ENCODE measurements at regions of chr4 and their contacts with region 1.

Region 1: DNA sequence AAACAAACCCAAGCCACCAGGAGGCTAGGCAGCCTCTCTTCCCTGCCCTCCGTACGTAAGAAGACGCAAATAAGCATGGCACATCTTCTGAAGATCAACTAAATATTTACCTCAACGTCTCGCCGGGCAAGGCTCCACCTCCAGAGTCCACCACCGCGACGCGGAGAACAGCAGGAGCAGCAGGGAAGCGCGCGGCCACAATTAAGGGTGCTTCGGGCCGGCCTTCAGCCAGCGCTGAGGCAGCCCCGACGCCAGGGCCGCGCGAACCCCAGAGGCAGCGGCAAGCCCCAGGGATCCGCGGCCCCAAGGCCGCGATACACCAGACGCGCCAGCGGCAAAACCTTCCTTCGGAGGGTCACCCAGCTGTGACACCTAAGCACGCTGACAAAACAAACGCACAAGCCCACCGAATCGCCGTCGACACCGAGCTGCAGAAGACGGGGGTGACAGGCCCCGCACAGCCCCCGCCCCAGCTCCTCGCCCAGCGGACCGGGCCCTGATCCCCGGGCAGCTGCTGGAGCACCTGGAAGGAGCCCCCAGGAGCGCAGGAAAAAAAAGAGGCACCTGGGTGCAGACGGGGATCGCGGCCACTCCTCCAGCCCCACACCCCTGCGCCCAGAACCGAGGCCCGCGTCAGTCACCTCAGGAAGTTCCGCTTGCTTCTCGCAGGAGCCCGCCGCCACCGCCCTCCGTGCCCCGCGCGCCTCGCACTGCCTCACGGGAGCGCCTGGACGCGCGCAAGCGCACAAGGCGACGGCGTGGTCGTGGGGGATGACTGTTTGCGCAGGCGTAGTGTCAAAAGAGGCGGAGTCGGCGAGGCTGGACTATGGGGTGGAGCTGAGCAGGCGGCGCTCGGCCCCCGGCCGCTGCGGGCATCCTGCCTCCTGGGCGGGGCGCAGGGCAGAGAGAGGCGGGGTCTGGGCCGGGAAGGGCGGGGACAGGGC is at the starts of genes HAUS3 and POLN:
- DNase-seq: peak; percentile 98 to 100 (median 99)
- ATAC-seq: peak; percentile 90
- H3K4me3 ChIP-seq: peak within 1 kb of the TSS; percentile 89 to 93
- H3K4me3 Mint-ChIP-seq: peak within 1 kb of the TSS; percentile 82
- H3K27ac ChIP-seq: peak within 1 kb of the TSS; percentile 86 to 88
- H3K27ac Mint-ChIP-seq: peak within 1 kb of the TSS; percentile 85
- H3K4me1 ChIP-seq: peaks cover 40% of the 10 kb centered on the region
- H3K4me1 Mint-ChIP-seq: peaks cover 56% of the 10 kb centered on the region
- H3K27me3 ChIP-seq: no peaks in the 10 kb centered on the region
- H3K27me3 Mint-ChIP-seq: no peaks in the 10 kb centered on the region
- CTCF ChIP-seq: no peak
- total RNA-seq, gene HAUS3: 154 TPM
- total RNA-seq, gene POLN: 0.89 to 1.7 TPM

Region 2: DNA sequence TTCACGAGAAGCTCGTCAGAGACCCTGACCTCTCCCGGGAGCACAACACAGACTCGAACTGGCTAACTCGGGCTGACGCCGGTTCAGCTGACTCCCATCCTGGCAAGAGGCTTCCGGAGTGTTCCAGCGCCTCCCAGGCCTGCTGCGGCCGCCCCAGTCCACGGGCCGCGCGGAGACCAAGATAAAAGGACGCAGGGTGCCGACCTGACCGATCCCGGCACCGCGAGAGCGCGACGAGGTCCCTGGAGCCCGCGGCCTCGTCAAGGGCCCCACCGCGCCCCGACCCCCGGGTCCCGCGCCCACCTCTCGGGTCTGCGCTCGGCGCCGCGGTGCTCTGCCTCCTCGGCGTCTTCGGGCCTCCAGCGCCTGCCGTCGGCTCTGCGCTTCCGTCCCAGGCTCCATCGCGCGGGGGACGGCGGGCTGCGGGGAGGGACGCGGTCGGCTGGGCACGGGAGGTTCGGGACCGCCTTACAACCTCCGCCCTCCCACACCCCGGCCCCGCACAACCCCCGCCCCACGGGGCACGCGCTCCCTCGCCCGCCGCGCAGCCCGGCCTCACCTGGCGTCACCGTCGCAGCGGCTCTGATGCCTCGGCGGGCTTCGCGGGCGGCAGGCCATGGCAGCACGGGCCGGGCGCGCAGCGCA is 530.0 kb before region 1 on chr4:
- CTCF ChIA-PET with region 1: no interaction called
- POLR2A ChIA-PET with region 1: no interaction called
- intact Hi-C with region 1: no loop called
- DNase-seq: peak in 5 of 9 experiments; percentile 30 to 65 (median 40)
- ATAC-seq: peak; percentile 17
- H3K4me3 ChIP-seq: peak overlapping the region; percentile 76 to 82
- H3K4me3 Mint-ChIP-seq: peak overlapping the region; percentile 94
- H3K27ac ChIP-seq: peak overlapping the region; percentile 79 to 97
- H3K27ac Mint-ChIP-seq: peak overlapping the region; percentile 94
- H3K4me1 ChIP-seq: peaks cover 42% of the 10 kb centered on the region
- H3K4me1 Mint-ChIP-seq: peaks cover 60% of the 10 kb centered on the region
- H3K27me3 ChIP-seq: no peaks in the 10 kb centered on the region
- H3K27me3 Mint-ChIP-seq: no peaks in the 10 kb centered on the region
- CTCF ChIP-seq: no peak

Region 3: DNA sequence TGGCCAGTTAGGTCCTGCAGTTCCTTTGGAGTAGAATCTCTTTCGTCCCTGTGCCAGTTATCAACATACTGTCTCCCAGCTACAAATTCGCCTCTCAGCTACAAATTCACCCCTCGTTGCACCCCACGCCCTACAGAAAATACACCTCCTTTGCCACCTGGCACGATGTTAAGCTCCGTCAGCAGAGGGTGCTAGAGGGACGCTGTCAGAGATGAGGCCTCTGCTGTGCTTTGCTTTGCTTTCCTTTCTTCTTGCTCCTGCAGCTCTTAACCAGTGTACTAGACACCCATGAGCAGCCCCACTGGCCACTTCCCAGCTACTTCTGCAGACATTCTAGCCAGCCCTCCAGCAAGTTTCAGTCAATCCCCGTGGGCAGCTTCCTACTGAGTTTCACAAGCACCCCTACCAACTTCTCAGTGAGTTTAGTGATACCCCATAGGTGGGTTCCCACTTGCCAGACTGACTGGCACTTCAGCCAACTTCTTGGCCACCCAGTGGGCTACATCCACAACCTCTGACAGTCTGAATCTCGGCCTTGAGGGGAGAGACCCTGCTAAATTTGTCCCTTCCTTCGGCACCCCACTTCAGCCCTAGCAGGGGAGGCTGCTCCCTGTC is 21.6 kb before region 1 on chr4:
- CTCF ChIA-PET with region 1: interaction called, 29 read pairs
- POLR2A ChIA-PET with region 1: interaction called, 4 read pairs
- intact Hi-C with region 1: loop called (anchors 1 to 2 kb)
- DNase-seq: peak; percentile 64 to 87 (median 83)
- ATAC-seq: peak; percentile 99
- H3K4me3 ChIP-seq: no peak overlapping the region
- H3K4me3 Mint-ChIP-seq: no peak overlapping the region
- H3K27ac ChIP-seq: no peak overlapping the region
- H3K27ac Mint-ChIP-seq: no peak overlapping the region
- H3K4me1 ChIP-seq: no peaks in the 10 kb centered on the region
- H3K4me1 Mint-ChIP-seq: peaks cover 4% of the 10 kb centered on the region
- H3K27me3 ChIP-seq: no peaks in the 10 kb centered on the region
- H3K27me3 Mint-ChIP-seq: no peaks in the 10 kb centered on the region
- CTCF ChIP-seq: peak; percentile 90

Region 4: DNA sequence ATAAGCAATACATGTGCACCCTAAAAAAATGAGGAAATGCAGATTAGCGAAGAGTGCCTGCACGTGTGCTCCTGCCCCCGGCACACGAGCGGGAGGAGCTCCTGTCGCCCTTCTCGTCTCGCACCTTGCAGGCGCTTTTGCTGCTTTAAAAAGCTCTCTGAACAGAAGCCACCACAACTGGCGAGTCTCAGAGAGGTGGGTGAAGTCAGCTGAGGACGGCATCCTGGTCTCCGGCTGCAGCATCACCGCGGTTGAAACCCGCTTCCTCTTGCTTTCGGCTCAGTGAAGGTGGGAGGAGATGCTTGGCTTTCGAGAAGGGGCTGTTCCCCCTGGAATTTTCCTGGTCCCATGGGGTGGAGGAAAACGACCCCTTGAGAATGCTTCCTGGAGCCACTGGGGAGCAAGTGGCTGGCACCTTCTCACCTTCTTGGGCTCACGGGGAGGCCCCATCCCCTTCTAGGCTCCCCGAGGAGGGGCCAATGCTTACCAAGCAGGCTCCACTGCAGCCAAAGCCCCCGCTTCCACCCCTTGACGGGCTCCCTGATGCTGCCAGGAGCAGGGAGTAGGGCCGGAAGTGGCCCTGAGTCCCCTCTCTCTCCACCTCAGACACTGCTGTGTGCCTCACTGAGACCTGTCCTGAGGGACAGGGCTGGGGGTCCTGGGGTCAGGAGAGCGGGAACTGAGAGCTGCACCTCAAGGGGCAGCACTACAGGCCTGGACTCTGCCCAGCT is 49.5 kb after region 1 on chr4:
- CTCF ChIA-PET with region 1: no interaction called
- POLR2A ChIA-PET with region 1: interaction called, 3 read pairs
- intact Hi-C with region 1: loop called (anchors 1 to 2 kb)
- DNase-seq: peak in 8 of 9 experiments; percentile 61 to 96 (median 81)
- ATAC-seq: peak; percentile 88
- H3K4me3 ChIP-seq: peak overlapping the region; percentile 19 to 29
- H3K4me3 Mint-ChIP-seq: peak overlapping the region; percentile 64
- H3K27ac ChIP-seq: peak overlapping the region; percentile 80 to 81
- H3K27ac Mint-ChIP-seq: peak overlapping the region; percentile 98
- H3K4me1 ChIP-seq: peaks cover 72% of the 10 kb centered on the region
- H3K4me1 Mint-ChIP-seq: peaks cover 56% of the 10 kb centered on the region
- H3K27me3 ChIP-seq: no peaks in the 10 kb centered on the region
- H3K27me3 Mint-ChIP-seq: no peaks in the 10 kb centered on the region
- CTCF ChIP-seq: no peak

Region 5: GRCh38 chr4:2418650-2419571 is 177.2 kb after region 1 on chr4 and contains the start of gene CFAP99:
- CTCF ChIA-PET with region 1: interaction called, 3 read pairs
- POLR2A ChIA-PET with region 1: interaction called, 5 read pairs
- intact Hi-C with region 1: loop called in 1 of 2 experiments (anchors 1 kb)
- DNase-seq: peak; percentile 97 to 99 (median 98)
- ATAC-seq: peak; percentile 87
- H3K4me3 ChIP-seq: peak within 1 kb of the TSS; percentile 52 to 56
- H3K4me3 Mint-ChIP-seq: peak within 1 kb of the TSS; percentile 87
- H3K27ac ChIP-seq: peak within 1 kb of the TSS; percentile 73 to 76
- H3K27ac Mint-ChIP-seq: peak within 1 kb of the TSS; percentile 94
- H3K4me1 ChIP-seq: peaks cover 43% of the 10 kb centered on the region
- H3K4me1 Mint-ChIP-seq: peaks cover 44% of the 10 kb centered on the region
- H3K27me3 ChIP-seq: peaks cover 6 to 10% of the 10 kb centered on the region in 2 experiments
- H3K27me3 Mint-ChIP-seq: peaks cover 14% of the 10 kb centered on the region
- CTCF ChIP-seq: peak; percentile 58
- total RNA-seq, gene CFAP99: 0.22 to 0.36 TPM

Region 6: GRCh38 chr4:2536193-2537010 is 294.7 kb after region 1 on chr4 and contains the start of gene FAM193A:
- CTCF ChIA-PET with region 1: no interaction called
- POLR2A ChIA-PET with region 1: no interaction called
- intact Hi-C with region 1: loop called in 1 of 2 experiments (anchors 1 kb)
- DNase-seq: peak; percentile 97 to 100 (median 99)
- ATAC-seq: peak; percentile 94
- H3K4me3 ChIP-seq: peak within 1 kb of the TSS; percentile 64 to 67
- H3K4me3 Mint-ChIP-seq: peak within 1 kb of the TSS; percentile 90
- H3K27ac ChIP-seq: peak within 1 kb of the TSS; percentile 71 to 76
- H3K27ac Mint-ChIP-seq: peak within 1 kb of the TSS; percentile 92
- H3K4me1 ChIP-seq: peaks cover 26% of the 10 kb centered on the region
- H3K4me1 Mint-ChIP-seq: peaks cover 29% of the 10 kb centered on the region
- H3K27me3 ChIP-seq: no peaks in the 10 kb centered on the region
- H3K27me3 Mint-ChIP-seq: no peaks in the 10 kb centered on the region
- CTCF ChIP-seq: no peak
- total RNA-seq, gene FAM193A: 29.0 to 30.2 TPM

Region 7: DNA sequence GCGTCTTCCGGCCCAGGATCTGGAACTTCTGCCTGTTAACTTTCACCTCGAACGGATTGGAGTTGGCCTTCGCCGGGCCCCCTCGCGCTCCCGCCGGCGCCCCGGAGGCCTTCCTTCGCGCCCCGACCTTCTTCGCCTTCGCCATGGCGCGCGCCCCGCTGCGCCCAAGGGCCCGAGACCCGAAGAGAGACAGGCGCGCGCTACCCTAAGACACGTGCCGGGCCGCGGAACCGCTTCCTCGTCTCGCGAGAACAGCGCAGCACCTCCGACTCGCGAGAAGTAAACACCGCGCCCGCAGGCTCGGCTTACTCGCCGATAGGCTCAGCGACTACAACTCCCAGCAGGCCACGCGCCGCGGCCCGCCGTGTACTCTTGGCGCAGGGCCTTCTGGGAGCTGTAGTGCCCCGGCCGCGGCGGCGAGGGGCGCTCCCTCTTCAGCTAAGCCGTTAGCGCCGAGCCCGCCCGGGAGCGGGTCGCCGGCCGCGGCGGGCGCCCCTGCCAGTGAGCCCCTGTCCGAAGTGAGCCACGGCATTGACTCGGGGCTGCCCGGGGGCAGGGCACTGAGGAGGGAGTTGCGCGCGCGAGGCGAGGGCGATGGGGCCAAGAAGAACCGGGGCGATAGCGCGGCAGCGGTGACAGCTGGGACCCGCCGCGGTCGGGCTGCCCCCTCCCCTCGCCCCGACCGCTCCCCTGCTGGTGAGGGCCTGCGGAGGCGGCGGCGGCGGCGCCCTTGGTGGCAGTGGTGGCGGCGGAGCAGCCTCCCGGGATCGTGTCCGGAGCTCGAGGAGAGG is 721.7 kb after region 1 on chr4 and contains the starts of genes GRK4 and NOP14:
- CTCF ChIA-PET with region 1: no interaction called
- POLR2A ChIA-PET with region 1: no interaction called
- intact Hi-C with region 1: loop called in 1 of 2 experiments (anchors 10 kb)
- DNase-seq: peak; percentile 92 to 99 (median 97)
- ATAC-seq: peak; percentile 87
- H3K4me3 ChIP-seq: peak within 1 kb of the TSS; percentile 82 to 86
- H3K4me3 Mint-ChIP-seq: peak within 1 kb of the TSS; percentile 78
- H3K27ac ChIP-seq: peak within 1 kb of the TSS; percentile 74 to 88
- H3K27ac Mint-ChIP-seq: peak within 1 kb of the TSS; percentile 94
- H3K4me1 ChIP-seq: peaks cover 23% of the 10 kb centered on the region
- H3K4me1 Mint-ChIP-seq: peaks cover 43% of the 10 kb centered on the region
- H3K27me3 ChIP-seq: no peaks in the 10 kb centered on the region
- H3K27me3 Mint-ChIP-seq: no peaks in the 10 kb centered on the region
- CTCF ChIP-seq: peak; percentile 45
- total RNA-seq, gene GRK4: 1.2 to 1.3 TPM
- total RNA-seq, gene NOP14: 23.5 to 23.9 TPM